Right ventricle myocardium inferior (tissue), 1 donor: ENCODE measurements at regions of chr16 and their contacts with region 1.

Region 1: DNA sequence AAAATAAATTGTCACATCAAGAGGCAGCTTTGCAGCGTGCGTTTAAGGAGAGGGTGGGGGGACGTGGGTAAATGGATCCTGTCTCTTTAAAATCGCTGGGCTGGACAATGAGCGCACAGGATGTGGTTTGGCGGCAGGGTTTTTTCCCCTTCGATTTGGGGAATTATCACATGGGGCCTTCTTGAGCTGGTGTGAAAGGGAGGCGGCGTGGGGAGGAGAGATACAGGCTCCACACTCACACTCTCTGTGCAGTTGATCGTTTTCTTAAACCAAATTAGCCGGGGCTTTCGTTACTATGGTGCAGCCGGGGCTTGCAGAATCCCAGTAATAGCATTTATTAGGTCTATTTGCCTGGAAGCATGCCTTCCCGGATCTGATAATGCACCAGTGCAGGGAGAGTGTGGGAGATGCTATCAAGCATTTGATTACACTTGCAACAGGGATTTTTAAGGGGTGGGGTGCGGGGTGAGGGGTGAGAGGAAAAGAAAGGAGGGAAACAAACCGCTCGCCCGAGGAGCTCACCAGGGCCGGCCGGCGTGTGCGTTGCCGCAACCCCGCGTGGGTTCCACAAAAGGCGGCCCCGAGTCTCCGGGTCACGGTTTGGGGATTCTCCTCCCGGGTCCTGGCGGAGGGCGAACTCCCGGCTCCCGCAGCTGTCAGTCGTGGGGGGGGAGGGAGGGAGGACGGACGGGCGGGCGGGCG is 58.9 kb upstream of the GSE1 start:
- DNase-seq: peak; percentile 80
- ATAC-seq: peak; percentile 66

Region 2: DNA sequence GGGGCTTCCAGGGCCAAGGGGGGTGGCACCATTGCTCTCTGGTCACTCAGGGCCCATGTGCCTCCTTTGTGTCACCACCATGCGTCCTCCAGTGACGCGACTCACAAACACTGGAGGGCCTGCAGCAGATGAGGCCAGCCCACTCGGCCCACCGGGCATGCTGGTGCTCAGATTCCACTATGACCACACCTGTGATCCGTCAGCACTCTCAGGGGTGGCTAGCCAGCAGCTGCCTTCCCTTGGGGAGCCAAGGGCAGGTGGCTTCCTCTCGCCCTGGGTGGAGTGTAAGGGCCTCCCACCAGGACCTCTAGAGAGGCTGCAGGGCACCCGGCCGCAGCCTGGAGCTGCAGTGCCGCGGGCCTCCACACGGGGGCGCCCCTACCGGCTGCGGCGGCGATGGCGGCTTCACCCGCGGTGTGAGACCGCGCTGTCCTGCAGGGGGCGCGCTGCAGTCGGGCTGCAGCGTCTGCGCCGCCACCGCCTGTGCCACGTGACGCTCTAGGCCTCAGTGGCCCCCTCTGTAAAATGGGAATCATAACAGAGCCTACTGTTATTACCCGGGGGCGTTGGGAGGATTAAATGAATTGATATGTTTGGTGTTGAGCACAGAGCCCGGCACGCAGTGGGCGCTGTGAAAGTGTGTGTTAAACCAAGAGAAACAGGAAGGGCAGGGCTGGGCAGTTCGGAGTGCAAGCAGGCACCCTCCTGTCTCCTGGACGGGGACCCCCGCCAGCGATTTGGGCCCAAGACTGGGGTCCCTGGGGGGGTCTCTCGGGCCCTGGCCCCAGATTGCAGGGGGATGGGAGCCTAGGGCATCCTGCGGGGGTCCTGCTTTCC is 133.5 kb before region 1 on chr16:
- intact Hi-C with region 1: loop called (anchors 5 kb)
- DNase-seq: peak; percentile 85
- ATAC-seq: peak; percentile 67

Region 3: DNA sequence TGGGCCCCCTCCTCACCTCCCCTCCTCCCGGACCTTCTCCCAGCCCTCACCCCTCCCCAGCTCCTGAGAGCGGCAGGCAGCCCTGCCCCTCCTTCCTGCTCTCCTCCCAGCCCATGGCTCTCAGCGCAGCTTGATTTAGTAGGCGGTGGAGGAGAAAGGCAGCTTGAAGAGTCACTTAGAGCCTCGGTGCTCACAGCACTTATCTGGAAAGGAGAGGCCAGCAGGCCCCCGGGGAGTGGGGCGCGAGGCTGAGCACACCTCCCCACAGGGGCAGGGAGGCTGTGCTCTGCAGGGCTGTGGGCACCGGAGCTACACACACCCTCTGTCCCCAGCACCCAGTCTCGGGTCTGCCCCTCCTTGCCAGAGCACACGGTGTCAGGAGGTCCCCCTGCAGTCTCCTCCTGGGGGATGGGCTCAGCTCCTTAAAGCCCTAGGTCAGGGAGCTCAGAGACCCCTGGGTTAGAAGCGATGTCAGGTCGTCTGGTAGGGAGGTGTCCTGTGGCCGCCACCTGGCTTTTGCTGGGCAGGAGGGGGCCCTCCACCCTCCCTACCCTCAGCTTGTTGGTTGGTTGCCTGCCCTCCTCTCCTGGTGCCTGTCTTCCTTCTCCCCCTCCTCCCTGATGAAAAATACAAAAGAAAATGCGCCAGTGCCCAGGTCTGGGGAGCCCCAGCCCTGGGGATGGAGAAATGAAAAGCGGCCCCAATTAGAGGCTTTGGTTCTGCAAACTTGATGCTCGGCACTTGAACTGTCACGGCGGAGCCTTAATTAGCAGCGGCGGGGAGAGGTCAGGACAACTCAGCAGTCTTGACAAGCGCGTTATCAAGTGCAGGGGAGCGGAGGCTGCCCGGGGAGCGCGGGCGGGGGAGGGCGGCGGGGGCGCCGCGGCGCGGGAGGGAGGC is 92.2 kb before region 1 on chr16:
- intact Hi-C with region 1: loop called (anchors 5 kb)
- DNase-seq: no peak
- ATAC-seq: peak; percentile 49

Region 4: GRCh38 chr16:85479972-85480751 is 74.1 kb before region 1 on chr16:
- intact Hi-C with region 1: no loop called
- DNase-seq: no peak
- ATAC-seq: peak; percentile 37

Region 5: DNA sequence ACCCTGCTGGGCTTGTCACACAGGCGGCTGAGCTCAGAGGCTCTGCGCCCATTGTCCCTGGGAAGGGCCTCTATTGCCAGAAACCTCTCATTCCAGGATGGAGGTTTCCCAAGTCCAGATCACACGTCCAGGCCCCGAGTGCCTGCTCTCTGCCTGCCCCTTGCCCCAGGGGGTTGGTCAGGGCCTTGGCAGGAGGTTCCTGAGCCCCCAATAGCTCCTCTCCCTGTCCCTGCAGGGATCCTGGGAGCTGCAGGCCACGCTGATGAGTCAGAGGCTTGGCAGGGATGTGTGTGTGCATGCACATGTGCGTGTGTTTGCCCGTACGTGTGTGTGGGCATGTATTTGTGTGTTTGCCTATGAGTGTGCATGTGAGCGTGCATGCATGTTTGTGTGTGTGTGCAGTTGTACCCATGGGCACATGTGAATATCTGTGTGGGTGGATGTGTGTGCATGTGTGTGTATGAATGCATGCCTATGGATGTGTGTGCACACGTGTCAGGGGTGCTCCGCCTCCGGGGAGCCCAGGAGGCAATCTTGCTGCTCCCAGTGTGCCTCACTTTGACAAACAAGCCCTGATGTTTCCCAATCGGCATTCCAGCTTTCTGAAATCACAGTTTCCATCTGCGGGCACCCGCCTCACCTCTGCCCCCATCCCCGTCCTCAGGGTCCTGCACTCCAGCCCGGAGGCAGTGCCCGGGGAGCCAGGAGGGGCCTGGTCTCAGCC is 39.5 kb before region 1 on chr16:
- intact Hi-C with region 1: loop called (anchors 5 kb)
- DNase-seq: no peak
- ATAC-seq: peak; percentile 77